ENCODE measurements at regions of chr15 and their contacts with region 1.

Region 1: DNA sequence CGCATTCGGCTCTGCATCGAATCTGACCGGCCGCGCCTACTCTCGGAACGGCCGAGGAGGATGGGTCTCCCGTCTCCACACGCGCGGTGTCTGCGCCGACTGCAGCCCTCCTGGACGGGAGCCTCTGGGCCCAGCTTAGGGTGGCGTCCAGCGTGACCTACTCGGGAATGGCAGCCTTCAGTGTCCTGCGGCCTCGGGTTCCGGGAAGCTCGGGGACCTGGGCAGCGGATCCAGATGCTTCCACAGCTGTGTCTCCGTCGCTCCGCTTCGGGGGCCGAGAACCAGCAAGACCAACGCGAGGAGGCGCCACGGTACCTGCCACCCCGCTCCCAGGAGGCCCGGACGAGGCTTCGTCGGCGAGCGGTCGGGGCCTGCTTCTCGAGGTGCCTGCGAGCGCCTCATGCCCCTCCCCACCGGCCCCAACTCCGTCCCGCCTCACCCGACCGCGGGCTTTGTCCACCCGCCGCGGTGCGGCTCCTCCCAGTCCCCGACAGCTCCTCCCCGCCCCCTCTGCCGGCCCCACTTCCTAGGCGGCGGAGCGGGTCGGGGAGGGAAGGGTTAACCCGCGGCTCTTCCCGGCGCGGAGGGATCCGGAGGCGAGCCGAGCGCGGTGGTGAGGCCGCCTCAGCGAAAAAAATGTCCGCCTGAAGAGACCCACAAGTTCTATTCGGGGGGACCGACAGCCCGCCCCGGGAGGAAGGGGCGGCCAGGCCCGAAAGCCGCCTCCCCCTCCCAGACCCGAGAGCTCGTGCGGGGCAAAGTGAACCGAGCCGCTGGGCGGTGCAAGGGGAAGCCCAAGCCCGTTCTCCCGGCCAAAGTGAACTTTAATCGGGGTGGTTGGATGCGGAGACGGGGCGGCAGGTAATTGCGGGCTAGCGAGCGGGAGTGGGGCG is at the start of gene TCF12:
- DNase-seq: peak; percentile 95
- total RNA-seq, gene TCF12: 57.3 TPM

Region 2: GRCh38 chr15:56732921-56733797 is 185.1 kb before region 1 on chr15 and contains the start of gene ZNF280D:
- intact Hi-C with region 1: loop called (anchors 1 kb)
- DNase-seq: peak; percentile 94
- total RNA-seq, gene ZNF280D: 34.7 TPM

Region 3: GRCh38 chr15:56886932-56887781 is 31.1 kb before region 1 on chr15:
- intact Hi-C with region 1: loop called (anchors 1 kb)
- DNase-seq: peak; percentile 96

Region 4: GRCh38 chr15:57138349-57138788 is 220.1 kb after region 1 on chr15:
- intact Hi-C with region 1: loop called (anchors 5 kb)
- DNase-seq: no peak

Region 5: GRCh38 chr15:57218826-57219576 is 300.7 kb after region 1 on chr15:
- intact Hi-C with region 1: loop called (anchors 5 kb)
- DNase-seq: no peak

Region 6: GRCh38 chr15:57306161-57306943 is 388.1 kb after region 1 on chr15:
- intact Hi-C with region 1: loop called (anchors 10 kb)
- DNase-seq: peak; percentile 94